Activated CD8-positive, alpha-beta T cell treated with anti-CD3 and anti-CD28 coated beads for 36 hours (primary cell): ENCODE measurements at regions of chr17 and their contacts with region 1.

Region 1: DNA sequence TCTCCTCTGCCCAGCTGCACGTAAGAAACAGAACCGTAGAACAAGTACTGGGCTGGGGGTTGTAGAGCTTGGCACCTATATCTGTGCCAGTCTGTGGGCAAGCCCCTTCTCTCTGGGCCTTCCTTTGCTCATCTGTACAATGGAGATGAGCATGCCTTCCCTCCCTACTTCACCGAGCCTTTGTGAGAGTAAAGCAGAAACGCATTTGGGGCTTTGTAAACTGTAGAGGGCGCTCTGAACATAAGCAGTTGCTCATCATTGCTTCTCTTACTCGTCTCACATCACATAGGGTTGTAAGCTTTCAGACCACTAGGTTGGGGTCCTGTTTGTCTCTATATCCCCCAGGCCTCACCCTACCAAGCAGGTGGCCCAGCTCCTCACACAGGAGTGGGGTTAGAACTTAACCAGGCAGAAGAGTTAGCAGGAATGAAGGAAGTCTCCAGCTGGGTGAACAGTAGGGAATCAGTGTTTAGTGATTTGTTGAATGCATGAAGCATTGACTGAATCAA is 15.1 kb downstream of the SAMD14 start:
- DNase-seq: peak; percentile 75
- ATAC-seq: peak; percentile 69
- H3K4me3 Mint-ChIP-seq: no peak overlapping the region
- H3K27ac Mint-ChIP-seq: no peak overlapping the region
- H3K4me1 Mint-ChIP-seq: peaks cover 12% of the 10 kb centered on the region
- H3K27me3 Mint-ChIP-seq: peaks cover 29% of the 10 kb centered on the region
- CTCF ChIP-seq: peak; percentile 63

Region 2: GRCh38 chr17:50043290-50044148 is 71.4 kb before region 1 on chr17:
- CTCF ChIA-PET with region 1: no interaction called
- POLR2A ChIA-PET with region 1: no interaction called
- intact Hi-C with region 1: no loop called
- DNase-seq: no peak
- ATAC-seq: no peak
- H3K4me3 Mint-ChIP-seq: no peak overlapping the region
- H3K27ac Mint-ChIP-seq: no peak overlapping the region
- H3K4me1 Mint-ChIP-seq: peaks cover 5% of the 10 kb centered on the region
- H3K27me3 Mint-ChIP-seq: peaks cover 4% of the 10 kb centered on the region
- CTCF ChIP-seq: no peak

Region 3: GRCh38 chr17:50102164-50102991 is 12.5 kb before region 1 on chr17:
- CTCF ChIA-PET with region 1: interaction called, 23 read pairs
- POLR2A ChIA-PET with region 1: interaction called, 3 read pairs
- intact Hi-C with region 1: no loop called
- DNase-seq: no peak
- ATAC-seq: no peak
- H3K4me3 Mint-ChIP-seq: no peak overlapping the region
- H3K27ac Mint-ChIP-seq: no peak overlapping the region
- H3K4me1 Mint-ChIP-seq: peaks cover 11% of the 10 kb centered on the region
- H3K27me3 Mint-ChIP-seq: no peaks in the 10 kb centered on the region
- CTCF ChIP-seq: no peak

Region 4: GRCh38 chr17:50129728-50130558 is 15.0 kb after region 1 on chr17 and contains the start of gene SAMD14:
- CTCF ChIA-PET with region 1: interaction called, 24 read pairs
- POLR2A ChIA-PET with region 1: interaction called, 9 read pairs
- intact Hi-C with region 1: no loop called
- DNase-seq: peak; percentile 61
- ATAC-seq: peak; percentile 53
- H3K4me3 Mint-ChIP-seq: peak within 1 kb of the TSS; percentile 58
- H3K27ac Mint-ChIP-seq: peak within 1 kb of the TSS; percentile 62
- H3K4me1 Mint-ChIP-seq: peaks cover 22% of the 10 kb centered on the region
- H3K27me3 Mint-ChIP-seq: peaks cover 23% of the 10 kb centered on the region
- CTCF ChIP-seq: no peak
- total RNA-seq, gene SAMD14: 0.47 to 1.3 TPM

Region 5: GRCh38 chr17:50184611-50185398 is 69.9 kb after region 1 on chr17:
- CTCF ChIA-PET with region 1: no interaction called
- POLR2A ChIA-PET with region 1: no interaction called
- intact Hi-C with region 1: no loop called
- DNase-seq: peak; percentile 28
- ATAC-seq: no peak
- H3K4me3 Mint-ChIP-seq: no peak overlapping the region
- H3K27ac Mint-ChIP-seq: no peak overlapping the region
- H3K4me1 Mint-ChIP-seq: peaks cover 12% of the 10 kb centered on the region
- H3K27me3 Mint-ChIP-seq: no peaks in the 10 kb centered on the region
- CTCF ChIP-seq: no peak

Region 6: DNA sequence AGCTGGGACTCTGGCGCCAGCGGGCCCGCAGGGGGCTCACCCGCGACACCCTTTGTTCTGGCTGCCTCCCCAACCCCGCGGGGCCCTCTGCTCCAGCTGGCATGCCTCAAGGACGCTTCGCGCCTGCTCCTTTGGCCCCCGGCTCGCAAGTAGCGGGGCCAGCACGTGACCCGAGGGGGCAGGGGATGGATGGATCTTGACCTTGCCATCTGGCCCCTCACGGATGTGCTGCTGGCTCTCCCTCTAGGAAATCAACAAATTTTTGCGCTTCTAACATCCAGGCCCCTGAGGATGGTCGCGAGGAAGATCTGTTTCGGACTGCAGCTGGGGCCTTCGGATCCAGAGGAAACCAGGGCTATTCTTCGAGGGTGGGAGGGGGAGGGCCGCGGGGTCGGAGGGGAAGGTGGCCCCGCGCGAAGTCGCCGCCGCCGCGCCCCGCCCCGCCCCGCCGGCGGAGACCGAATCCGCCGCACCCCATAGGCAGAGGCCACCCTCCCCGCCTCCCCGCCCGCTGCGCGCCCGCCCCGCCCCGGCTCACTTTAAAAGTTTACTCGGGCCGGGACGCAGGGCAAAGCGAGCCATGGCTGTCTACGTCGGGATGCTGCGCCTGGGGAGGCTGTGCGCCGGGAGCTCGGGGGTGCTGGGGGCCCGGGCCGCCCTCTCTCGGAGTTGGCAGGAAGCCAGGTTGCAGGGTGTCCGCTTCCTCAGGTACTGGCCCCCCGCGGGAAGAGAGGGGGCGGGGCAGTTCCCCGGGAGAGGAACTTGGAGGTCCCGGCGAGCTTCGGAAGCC is 311.0 kb after region 1 on chr17 and contains the start of gene ACSF2:
- CTCF ChIA-PET with region 1: no interaction called
- POLR2A ChIA-PET with region 1: no interaction called
- intact Hi-C with region 1: no loop called
- DNase-seq: peak; percentile 79
- ATAC-seq: peak; percentile 85
- H3K4me3 Mint-ChIP-seq: peak within 1 kb of the TSS; percentile 80
- H3K27ac Mint-ChIP-seq: peak within 1 kb of the TSS; percentile 77
- H3K4me1 Mint-ChIP-seq: peaks cover 34% of the 10 kb centered on the region
- H3K27me3 Mint-ChIP-seq: no peaks in the 10 kb centered on the region
- CTCF ChIP-seq: no peak
- total RNA-seq, gene ACSF2: 14.5 to 17.5 TPM